ENCODE measurements at regions of chr6 and their contacts with region 1.

Region 1: GRCh38 chr6:75208298-75209183 is 2.7 kb upstream of the COL12A1 start:
- DNase-seq: peak; percentile 71
- H3K4me3 Mint-ChIP-seq: peak overlapping the region; percentile 66
- H3K27ac Mint-ChIP-seq: peak overlapping the region; percentile 29
- H3K4me1 Mint-ChIP-seq: peaks cover 59% of the 10 kb centered on the region
- H3K27me3 Mint-ChIP-seq: peaks cover 68% of the 10 kb centered on the region

Region 2: GRCh38 chr6:73675466-73676098 is 1533.0 kb before region 1 on chr6:
- intact Hi-C with region 1: loop called (anchors 5 kb)
- DNase-seq: peak; percentile 57
- H3K4me3 Mint-ChIP-seq: no peak overlapping the region
- H3K27ac Mint-ChIP-seq: no peak overlapping the region
- H3K4me1 Mint-ChIP-seq: peaks cover 6% of the 10 kb centered on the region
- H3K27me3 Mint-ChIP-seq: peaks cover 16% of the 10 kb centered on the region

Region 3: DNA sequence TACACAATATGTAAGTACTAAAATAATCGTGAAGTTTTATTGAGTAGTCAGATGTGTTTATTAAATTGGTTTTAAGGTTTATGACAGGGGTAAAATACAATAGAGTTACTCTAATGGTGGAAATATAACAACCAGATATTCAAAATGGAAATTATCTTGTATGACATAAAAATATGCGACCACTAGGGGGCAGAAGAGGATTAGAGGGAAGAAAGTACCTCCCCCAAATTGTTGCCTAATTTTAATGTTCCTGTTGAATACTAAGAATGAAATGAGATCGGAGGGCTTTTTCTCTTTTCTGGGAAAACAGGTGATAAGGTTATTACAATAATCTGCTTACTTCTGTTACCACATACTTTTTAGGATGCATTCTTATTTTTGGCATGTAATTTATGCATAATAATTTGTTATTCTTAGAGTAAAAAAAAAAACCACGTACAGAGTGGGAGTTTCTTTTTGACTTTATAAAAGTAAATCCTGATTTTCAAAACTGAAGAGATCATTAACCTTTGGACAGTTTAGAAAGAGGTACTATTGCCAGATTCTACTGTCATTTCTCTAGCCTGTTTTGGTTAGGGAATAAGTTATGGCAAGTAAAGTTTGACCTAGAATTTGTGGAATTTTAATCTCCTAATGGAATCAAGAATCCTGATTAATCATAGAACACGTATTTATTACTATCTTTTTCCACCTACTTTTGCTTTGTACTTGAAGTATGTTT is 1353.4 kb before region 1 on chr6:
- intact Hi-C with region 1: loop called (anchors 1 kb)
- DNase-seq: no peak
- H3K4me3 Mint-ChIP-seq: no peak overlapping the region
- H3K27ac Mint-ChIP-seq: no peak overlapping the region
- H3K4me1 Mint-ChIP-seq: no peaks in the 10 kb centered on the region
- H3K27me3 Mint-ChIP-seq: no peaks in the 10 kb centered on the region

Region 4: DNA sequence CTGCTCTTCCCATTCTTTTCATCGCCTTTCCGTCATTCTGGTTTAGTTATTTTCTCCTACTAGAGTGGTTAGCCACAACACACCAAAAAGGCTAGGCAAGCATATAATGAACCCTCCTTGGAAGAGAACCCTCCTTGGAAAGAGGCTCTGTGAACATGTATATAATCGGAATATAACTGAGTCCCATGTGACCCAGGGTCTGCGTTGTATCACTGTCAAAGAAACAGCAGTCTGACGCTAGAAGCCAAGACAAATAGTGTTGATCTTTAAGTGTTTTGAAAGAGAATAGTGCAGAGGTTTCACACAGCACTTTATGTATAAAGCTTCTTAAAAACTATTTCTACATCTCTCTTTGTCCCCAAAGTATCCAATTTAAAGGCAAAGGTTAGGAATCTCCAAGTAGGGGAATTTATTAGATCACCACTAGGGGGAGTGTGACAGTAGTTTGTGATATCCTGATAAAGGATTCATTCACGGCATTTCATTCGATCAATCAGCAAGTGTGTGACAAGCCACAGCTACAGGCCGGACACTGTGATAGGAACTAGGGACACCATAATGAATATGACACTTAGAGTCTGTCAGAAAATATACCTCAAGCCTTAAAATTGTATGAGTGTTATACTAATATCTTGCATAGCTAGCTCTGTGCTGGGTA is 1117.3 kb before region 1 on chr6:
- intact Hi-C with region 1: loop called (anchors 1 kb)
- DNase-seq: no peak
- H3K4me3 Mint-ChIP-seq: no peak overlapping the region
- H3K27ac Mint-ChIP-seq: no peak overlapping the region
- H3K4me1 Mint-ChIP-seq: no peaks in the 10 kb centered on the region
- H3K27me3 Mint-ChIP-seq: peaks cover 5% of the 10 kb centered on the region

Region 5: GRCh38 chr6:74645108-74645849 is 563.3 kb before region 1 on chr6:
- intact Hi-C with region 1: no loop called
- DNase-seq: no peak
- H3K4me3 Mint-ChIP-seq: no peak overlapping the region
- H3K27ac Mint-ChIP-seq: no peak overlapping the region
- H3K4me1 Mint-ChIP-seq: no peaks in the 10 kb centered on the region
- H3K27me3 Mint-ChIP-seq: no peaks in the 10 kb centered on the region

Region 6: GRCh38 chr6:74749211-74750142 is 459.1 kb before region 1 on chr6:
- intact Hi-C with region 1: loop called (anchors 10 kb)
- DNase-seq: no peak
- H3K4me3 Mint-ChIP-seq: no peak overlapping the region
- H3K27ac Mint-ChIP-seq: no peak overlapping the region
- H3K4me1 Mint-ChIP-seq: no peaks in the 10 kb centered on the region
- H3K27me3 Mint-ChIP-seq: no peaks in the 10 kb centered on the region

Region 7: GRCh38 chr6:75526502-75527127 is 318.1 kb after region 1 on chr6:
- intact Hi-C with region 1: loop called (anchors 1 kb)
- DNase-seq: peak; percentile 27
- H3K4me3 Mint-ChIP-seq: no peak overlapping the region
- H3K27ac Mint-ChIP-seq: no peak overlapping the region
- H3K4me1 Mint-ChIP-seq: no peaks in the 10 kb centered on the region
- H3K27me3 Mint-ChIP-seq: peaks cover 32% of the 10 kb centered on the region